ENCODE measurements at regions of chr4 and their contacts with region 1.

Region 1: DNA sequence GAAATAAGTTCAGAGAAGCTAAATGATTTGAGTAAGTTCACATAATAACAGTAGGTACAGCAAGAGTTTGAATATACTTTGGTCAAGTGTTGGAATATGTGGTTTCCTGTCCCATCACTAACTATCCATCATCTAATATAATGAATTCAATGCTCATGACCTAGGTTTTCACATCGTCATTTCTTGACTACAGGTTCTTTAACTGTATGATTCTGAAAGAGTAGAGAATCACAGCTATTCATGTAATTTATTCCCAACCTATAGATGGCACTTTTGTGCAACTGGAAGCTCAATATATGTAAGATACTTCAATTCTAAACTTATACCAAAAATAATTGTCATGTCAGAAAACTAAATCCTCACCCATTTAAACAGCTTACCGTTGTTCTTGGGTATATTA is 53.1 kb downstream of the TIGD2 start:
- DNase-seq: no peak
- CTCF ChIP-seq: no peak

Region 2: DNA sequence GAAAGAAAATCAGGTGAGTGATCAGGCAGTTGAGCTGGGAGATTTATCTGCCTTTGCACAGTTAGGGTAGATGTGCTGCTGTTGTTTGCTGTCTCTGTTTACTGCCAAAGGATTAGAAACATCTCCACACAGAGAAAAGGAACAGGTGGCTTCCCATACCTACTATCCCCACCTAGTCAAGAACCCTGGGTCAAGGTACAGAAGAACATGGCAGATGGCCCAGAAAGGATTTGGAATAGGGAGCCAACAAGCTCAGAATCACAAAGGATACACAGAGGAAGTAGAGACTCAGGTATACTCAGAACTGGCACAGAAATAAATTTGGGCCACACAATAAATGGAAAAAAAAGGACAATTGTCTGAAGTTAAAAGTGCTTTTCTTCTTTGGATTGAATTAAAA is 11.2 kb after region 1 on chr4:
- CTCF ChIA-PET with region 1: interaction called, 15 read pairs
- POLR2A ChIA-PET with region 1: no interaction called
- DNase-seq: no peak
- CTCF ChIP-seq: no peak